Endothelial cell of umbilical vein (primary cell): ENCODE measurements at regions of chr3 and their contacts with region 1.

Region 1: DNA sequence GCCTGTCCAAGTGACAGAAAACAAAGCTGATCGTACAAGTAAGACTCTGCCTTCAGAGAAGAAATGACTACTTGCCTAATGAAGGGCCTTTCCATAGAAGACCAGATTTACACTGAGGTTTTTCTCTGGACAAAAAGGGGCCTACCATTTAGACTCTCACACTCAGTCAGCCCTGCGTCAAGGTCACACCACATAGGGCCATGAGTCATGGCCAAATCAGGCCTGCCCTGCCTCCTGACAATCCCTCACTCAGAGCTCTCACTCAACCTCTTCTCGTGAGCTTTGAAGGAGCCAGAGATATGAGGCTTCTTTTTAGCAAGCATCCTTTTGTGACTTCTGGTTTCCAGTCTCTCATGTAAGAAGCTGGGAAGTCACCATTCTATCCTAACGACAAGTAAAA is 68.1 kb upstream of the NMNAT3 start:
- DNase-seq: no peak
- H3K4me3 ChIP-seq: no peak overlapping the region
- H3K27ac ChIP-seq: no peak overlapping the region
- H3K4me1 ChIP-seq: no peaks in the 10 kb centered on the region
- H3K27me3 ChIP-seq: no peaks in the 10 kb centered on the region
- CTCF ChIP-seq: no peak
- POLR2A ChIP-seq: no peak

Region 2: DNA sequence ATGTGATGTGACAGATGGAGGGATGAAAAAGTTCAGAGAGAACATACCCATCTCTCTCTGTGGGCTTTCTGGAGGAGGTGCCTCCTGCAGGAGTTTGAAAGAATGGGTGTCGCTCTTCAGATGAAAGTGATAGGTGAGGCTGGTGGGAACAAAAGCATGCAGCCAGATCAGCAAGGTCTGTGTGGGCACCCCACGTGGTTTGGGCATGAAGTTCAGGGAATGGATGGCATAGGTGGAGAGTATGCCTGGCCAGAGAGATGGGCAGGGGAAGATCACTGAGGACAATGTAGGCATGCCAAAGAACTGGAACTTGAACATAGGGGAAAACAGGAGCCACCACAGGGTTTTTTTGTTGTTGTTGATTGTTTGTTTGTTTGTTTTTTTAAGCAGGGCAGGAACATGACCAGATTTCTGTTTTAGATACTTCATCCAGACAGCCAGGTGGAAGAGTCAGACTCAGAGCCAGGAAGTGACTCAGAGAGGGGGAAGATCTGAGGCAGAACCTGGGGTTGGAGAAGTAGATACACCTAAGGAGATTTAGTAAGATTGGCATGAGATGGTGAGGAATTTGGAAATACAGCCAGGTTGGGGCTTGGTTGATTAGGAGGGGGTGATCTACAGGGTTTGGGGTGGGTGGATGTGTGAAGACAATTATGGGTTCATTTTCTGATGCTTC is 124.3 kb after region 1 on chr3:
- CTCF ChIA-PET with region 1: no interaction called
- POLR2A ChIA-PET with region 1: no interaction called
- dilution Hi-C with region 1: loop called (anchors 25 kb)
- intact Hi-C with region 1: no loop called
- DNase-seq: no peak
- H3K4me3 ChIP-seq: no peak overlapping the region
- H3K27ac ChIP-seq: no peak overlapping the region
- H3K4me1 ChIP-seq: no peaks in the 10 kb centered on the region
- H3K27me3 ChIP-seq: no peaks in the 10 kb centered on the region
- CTCF ChIP-seq: no peak
- POLR2A ChIP-seq: no peak